Colonic mucosa (tissue), 4 donors: ENCODE measurements at regions of chr6 and their contacts with region 1.

Region 1: GRCh38 chr6:7312616-7313504 is at the start of gene SSR1:
- DNase-seq: peak; percentile 97
- H3K4me3 ChIP-seq: peak within 1 kb of the TSS; percentile 87
- H3K27ac ChIP-seq: peak within 1 kb of the TSS; percentile 93
- H3K4me1 ChIP-seq: peaks cover 6% of the 10 kb centered on the region
- H3K27me3 ChIP-seq: no peaks in the 10 kb centered on the region
- CTCF ChIP-seq: no peak
- total RNA-seq, gene SSR1: 150 to 153 TPM

Region 2: DNA sequence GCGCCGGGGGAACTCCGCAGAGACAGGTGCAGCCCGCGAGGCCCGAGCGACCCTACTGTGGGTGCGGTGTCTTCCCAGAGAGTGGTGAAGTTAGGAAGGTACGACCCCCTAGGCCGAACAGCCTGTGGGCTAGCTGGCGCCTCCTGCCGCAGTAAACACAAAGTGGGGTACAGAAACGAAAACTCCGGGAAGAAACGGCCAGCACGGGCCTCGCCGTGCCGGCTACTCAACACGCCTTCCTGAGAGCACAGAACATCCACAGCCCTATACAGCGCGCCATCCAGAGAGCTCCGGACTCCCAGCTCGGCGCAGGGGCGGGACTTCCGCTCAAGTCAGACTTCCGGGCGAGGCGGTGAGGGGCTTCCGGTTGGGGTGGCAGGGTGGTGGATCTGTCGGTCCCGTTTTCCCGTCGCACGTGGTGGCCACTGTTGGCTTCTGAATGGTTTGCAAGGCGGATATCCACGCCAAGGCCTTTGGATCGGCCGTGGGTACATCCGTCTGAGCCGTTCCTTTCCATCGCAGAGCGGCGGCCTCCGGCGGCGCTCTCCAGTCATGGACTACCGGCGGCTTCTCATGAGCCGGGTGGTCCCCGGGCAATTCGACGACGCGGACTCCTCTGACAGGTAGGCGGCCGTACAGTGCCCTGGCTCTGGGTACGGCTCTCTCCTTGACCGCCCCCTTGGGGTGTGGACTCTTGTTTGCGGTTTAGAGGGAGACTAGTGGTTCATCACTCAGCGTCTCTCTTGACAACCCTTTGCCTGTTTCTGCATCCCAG is 76.8 kb after region 1 on chr6 and contains the starts of genes CAGE1 and RIOK1:
- intact Hi-C with region 1: loop called (anchors 5 kb)
- DNase-seq: peak; percentile 98
- H3K4me3 ChIP-seq: peak within 1 kb of the TSS; percentile 73
- H3K27ac ChIP-seq: peak within 1 kb of the TSS; percentile 98
- H3K4me1 ChIP-seq: peaks cover 7% of the 10 kb centered on the region
- H3K27me3 ChIP-seq: no peaks in the 10 kb centered on the region
- CTCF ChIP-seq: no peak
- total RNA-seq, gene CAGE1: not detected
- total RNA-seq, gene RIOK1: 16.6 to 16.9 TPM